ENCODE measurements at regions of chr2 and their contacts with region 1.

Region 1: GRCh38 chr2:60581433-60582282 is 28.2 kb upstream of the BCL11A start:
- DNase-seq: peak; percentile 84
- H3K4me3 ChIP-seq: peak overlapping the region; percentile 67
- H3K27ac ChIP-seq: no peak overlapping the region
- H3K4me1 ChIP-seq: no peaks in the 10 kb centered on the region
- H3K27me3 ChIP-seq: peaks cover 37% of the 10 kb centered on the region

Region 2: DNA sequence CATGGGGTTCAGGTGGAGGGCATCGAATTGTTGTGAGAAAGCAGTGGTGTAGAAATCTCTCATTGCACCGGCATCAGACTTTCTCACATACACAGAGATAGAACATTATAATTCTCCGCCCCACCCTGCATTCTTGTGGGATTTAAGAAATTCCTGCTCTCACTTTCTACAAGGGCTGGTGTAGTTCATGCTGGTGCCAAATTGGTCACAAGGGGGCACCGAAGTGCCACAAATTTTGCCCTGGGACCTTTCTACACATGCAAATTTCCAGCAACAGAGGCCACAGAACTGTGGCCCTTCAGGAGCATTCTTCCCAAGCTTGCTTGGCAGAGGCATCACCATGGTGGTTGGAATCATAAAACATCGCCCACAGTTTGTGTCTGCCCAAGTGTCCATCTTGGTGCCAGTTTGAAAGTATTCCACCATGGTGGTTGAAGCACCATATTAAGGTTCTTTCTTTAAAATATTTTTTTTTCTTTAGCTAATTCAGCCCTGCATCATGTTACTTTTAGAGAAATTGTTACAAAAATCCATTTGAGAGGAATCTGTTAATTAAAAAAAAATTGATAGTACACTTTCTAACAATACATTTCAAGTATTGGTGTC is 1819.4 kb before region 1 on chr2:
- in situ Hi-C with region 1: loop called (anchors 25 kb)
- DNase-seq: peak; percentile 78
- H3K4me3 ChIP-seq: no peak overlapping the region
- H3K27ac ChIP-seq: no peak overlapping the region
- H3K4me1 ChIP-seq: no peaks in the 10 kb centered on the region
- H3K27me3 ChIP-seq: peaks cover 21% of the 10 kb centered on the region; the same call in 1 of the 2 replicates

Region 3: DNA sequence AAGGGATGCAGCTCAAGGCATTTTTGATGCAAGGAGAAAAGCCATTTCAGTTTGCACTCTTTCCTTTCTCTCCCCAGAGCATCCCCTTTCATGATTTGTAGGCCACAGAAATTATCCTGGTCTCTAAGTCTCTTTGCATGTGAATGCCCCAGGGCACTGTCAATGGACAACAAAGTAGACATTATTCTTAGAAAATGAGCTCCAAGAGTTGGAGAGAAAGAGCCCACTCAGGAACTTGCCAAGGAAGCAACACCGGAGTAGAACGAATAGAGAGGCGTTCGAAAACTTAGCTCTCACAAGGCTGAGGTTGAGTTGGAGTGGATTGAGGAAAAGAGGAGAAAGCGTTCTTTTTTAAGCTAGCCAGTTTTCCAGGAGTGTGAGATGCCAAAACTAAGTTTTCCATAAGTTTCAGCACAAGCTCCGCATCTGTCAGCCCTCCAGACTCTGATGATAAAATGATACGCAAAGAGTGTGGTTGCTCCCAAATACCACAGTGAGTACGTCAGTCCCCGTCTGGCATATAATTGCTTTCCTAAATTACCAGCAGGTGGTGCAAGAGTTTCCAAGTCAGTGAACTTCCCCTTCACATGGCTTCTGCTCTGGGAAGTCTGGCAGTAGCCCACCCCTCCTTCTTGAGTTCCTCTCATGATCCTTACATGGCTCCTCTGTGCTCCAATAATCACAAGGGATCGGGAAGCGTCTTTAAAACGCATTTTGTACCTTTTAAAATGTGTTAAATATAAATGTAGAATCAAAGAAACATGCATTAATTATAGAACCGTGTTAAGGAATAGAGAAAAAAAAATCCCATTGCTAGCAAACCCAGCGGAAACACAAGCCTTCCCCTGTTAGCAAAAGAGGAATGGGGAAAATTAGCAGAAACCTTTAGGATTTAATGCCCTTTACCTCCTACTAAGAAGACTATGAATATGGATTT is 1279.9 kb before region 1 on chr2:
- in situ Hi-C with region 1: loop called (anchors 25 kb)
- DNase-seq: peak; percentile 81
- H3K4me3 ChIP-seq: no peak overlapping the region
- H3K27ac ChIP-seq: no peak overlapping the region
- H3K4me1 ChIP-seq: no peaks in the 10 kb centered on the region
- H3K27me3 ChIP-seq: peaks cover 18% of the 10 kb centered on the region; the same call in 1 of the 2 replicates